Posterior vena cava (tissue), 2 donors: ENCODE measurements at regions of chr3 and their contacts with region 1.

Region 1: GRCh38 chr3:195204360-195205163 is 66.4 kb downstream of the XXYLT1 start:
- DNase-seq: peak; percentile 83

Region 2: GRCh38 chr3:195172039-195172684 is 32.4 kb before region 1 on chr3:
- intact Hi-C with region 1: loop called in 1 of 2 experiments (anchors 5 kb)
- DNase-seq: no peak

Region 3: DNA sequence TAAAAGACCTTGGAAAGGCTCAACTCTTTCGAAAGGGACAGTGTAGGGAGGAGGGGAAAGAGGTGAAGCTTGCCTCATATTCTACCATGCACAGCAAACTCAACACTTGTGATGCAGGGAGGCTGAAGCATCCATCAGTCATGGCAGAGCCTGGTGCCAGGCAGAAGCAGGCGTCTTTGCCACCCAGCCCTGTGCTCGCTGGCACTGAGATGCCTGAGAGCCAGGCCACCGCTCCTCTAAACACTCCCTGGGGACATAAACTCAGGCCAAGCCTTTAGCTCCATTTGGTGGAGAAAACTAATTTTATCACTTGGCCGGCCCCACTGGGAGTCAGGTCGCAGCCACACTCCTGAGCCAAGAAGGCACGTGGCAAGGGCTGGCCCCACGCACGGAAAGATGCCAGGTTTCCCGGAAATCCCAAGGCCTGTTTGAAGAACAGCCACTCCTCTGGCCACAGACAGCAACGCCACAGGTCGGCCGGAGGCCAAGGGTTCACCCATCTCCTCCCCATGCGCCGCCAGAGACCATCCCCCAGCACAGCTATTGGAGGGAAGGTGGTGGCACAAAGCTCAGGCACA is 35.7 kb after region 1 on chr3:
- intact Hi-C with region 1: loop called in 1 of 2 experiments (anchors 5 kb)
- DNase-seq: peak; percentile 89